ENCODE measurements at regions of chr20 and their contacts with region 1.

Region 1: DNA sequence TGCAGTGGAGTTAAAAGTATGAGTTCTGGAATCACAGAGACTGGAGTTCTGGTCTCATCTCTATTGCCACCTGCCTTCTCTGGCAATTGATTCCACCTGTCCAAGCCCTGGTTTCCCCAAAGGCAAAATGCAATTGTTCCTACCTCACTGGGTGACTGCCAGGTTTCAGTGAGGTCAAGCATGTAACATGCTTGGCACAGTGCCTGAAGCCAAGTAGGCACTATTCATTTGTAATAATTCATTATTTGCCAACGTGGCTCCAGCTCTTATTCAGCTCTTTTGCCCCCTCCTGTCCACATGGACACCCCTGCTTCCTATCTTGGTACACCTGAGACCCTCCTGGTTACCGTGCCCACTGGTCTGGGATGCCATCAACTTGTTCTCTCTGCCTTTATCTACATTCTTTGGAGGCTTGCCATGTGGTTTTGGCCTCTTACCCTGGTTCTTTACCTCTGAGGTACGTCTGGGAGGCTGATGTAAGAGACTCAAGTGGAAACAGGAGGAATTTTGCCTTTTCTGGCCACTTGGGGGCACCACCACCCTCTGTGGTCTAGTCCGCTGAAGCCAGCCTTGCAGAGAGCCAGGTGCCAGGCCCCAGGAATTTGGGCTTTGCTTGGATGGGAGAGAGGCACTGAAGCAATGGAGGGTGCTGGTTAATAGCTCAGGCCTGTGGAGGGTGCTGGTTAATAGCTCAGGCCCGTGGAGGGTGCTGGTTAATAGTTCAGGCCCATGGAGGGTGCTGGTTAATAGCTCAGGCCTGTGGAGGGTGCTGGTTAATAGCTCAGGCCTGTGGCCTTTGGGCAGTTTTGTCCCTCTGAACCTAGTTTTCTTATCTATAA is 1.7 kb downstream of the KCNK15 start:
- DNase-seq: peak; percentile 86
- ATAC-seq: peak; percentile 65

Region 2: GRCh38 chr20:44615169-44615791 is 132.1 kb before region 1 on chr20:
- intact Hi-C with region 1: no loop called
- DNase-seq: no peak
- ATAC-seq: peak; percentile 38

Region 3: GRCh38 chr20:44866703-44867335 is 119.4 kb after region 1 on chr20:
- intact Hi-C with region 1: loop called (anchors 5 kb)
- DNase-seq: no peak
- ATAC-seq: no peak

Region 4: DNA sequence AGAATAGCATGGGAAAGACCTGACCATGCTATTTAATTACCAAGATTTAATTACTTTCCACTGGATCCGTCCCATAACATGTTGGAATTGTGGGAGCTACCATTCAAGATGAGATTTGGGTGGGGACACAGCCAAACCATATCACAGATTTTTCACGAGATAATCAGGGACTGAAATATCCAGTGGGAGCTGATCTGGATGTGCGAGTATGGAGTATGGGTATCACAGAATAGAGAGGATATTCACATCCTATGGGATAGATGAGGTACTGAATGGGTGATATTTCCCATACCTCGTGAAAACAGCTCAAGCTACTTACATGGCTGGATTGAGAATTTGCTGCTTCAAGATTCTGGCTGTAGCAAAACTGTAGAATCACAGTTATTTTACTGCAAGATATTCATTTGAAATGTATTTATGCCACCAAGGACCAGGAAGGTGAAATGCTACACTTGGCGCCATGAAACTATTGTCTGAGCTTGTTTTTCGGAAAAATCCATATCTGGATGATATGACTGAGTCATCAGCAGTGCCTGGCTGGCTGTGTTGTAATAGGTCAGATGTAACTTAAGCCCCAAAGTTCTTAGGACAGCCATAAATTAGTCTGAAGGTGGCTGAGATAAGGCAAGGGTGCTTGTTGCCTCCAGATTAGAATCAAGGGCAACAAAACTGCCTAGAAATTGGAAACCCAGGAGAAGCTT is 323.7 kb after region 1 on chr20:
- intact Hi-C with region 1: no loop called
- DNase-seq: no peak
- ATAC-seq: no peak